ENCODE measurements at regions of chrX and their contacts with region 1.

Region 1: GRCh38 chrX:110412971-110413721 is 54.5 kb downstream of the RTL9 start:
- DNase-seq: peak; percentile 66 to 76
- ATAC-seq: peak; percentile 96 to 97
- H3K4me3 ChIP-seq: no peak overlapping the region
- H3K27ac ChIP-seq: peak overlapping the region; percentile 28 to 69; a peak in 3 of 6 replicates
- H3K4me1 ChIP-seq: peaks cover 22% of the 10 kb centered on the region
- CTCF ChIP-seq: peak; percentile 77
- EP300 ChIP-seq: no peak
- POLR2A ChIP-seq: no peak
- RAD21 ChIP-seq: peak; percentile 77 to 86

Region 2: GRCh38 chrX:110086916-110087484 is 326.1 kb before region 1 on chrX:
- CTCF ChIA-PET with region 1: no interaction called
- POLR2A ChIA-PET with region 1: no interaction called
- DNase-seq: peak; percentile 72 to 94
- ATAC-seq: peak; percentile 84 to 86
- H3K4me3 ChIP-seq: no peak overlapping the region; the same call in 1 of the 3 replicates
- H3K27ac ChIP-seq: peak overlapping the region; percentile 96 to 99
- H3K4me1 ChIP-seq: peaks cover 72% of the 10 kb centered on the region
- CTCF ChIP-seq: no peak
- EP300 ChIP-seq: peak; percentile 59 to 75; a peak in 3 of 5 replicates
- POLR2A ChIP-seq: no peak
- RAD21 ChIP-seq: no peak; a peak in 1 of 5 replicates

Region 3: GRCh38 chrX:110167952-110168451 is 245.1 kb before region 1 on chrX:
- CTCF ChIA-PET with region 1: interaction called, 848 read pairs
- POLR2A ChIA-PET with region 1: no interaction called
- DNase-seq: peak; percentile 25 to 32
- ATAC-seq: peak; percentile 60 to 78; a peak in 4 of 6 replicates
- H3K4me3 ChIP-seq: no peak overlapping the region
- H3K27ac ChIP-seq: peak overlapping the region; percentile 38 to 67; a peak in 5 of 6 replicates
- H3K4me1 ChIP-seq: peaks cover 47% of the 10 kb centered on the region
- CTCF ChIP-seq: peak; percentile 39
- EP300 ChIP-seq: no peak
- POLR2A ChIP-seq: no peak
- RAD21 ChIP-seq: peak; percentile 41 to 42

Region 4: GRCh38 chrX:110402479-110403230 is 10.5 kb before region 1 on chrX:
- CTCF ChIA-PET with region 1: interaction called, 43 read pairs
- POLR2A ChIA-PET with region 1: no interaction called
- DNase-seq: peak; percentile 24 to 66
- ATAC-seq: peak; percentile 93 to 94
- H3K4me3 ChIP-seq: no peak overlapping the region
- H3K27ac ChIP-seq: peak overlapping the region; percentile 71 to 75
- H3K4me1 ChIP-seq: peaks cover 22% of the 10 kb centered on the region
- CTCF ChIP-seq: no peak
- EP300 ChIP-seq: no peak
- POLR2A ChIP-seq: no peak
- RAD21 ChIP-seq: no peak

Region 5: DNA sequence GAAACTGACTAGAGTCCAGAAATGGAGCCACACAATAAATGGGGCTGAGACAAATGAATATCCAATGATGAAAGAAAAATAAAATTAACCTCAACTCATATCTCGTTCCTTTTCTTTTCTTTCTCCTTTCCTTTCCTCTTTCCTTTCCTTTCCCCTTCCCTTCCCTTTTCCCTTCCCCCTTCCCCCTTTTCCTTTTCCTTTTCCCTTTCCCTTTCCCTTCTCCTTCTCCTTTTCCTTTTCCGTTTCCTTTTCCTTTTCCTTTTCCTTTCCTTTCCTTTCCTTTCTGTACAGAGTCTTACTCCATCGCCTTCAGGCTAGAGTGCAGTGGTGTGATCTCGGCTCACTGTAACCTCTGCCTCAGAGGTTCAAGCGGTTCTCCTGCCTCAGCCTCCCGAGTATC is 91.8 kb after region 1 on chrX:
- CTCF ChIA-PET with region 1: no interaction called
- POLR2A ChIA-PET with region 1: no interaction called
- DNase-seq: no peak
- ATAC-seq: no peak
- H3K4me3 ChIP-seq: no peak overlapping the region
- H3K27ac ChIP-seq: no peak overlapping the region
- H3K4me1 ChIP-seq: no peaks in the 10 kb centered on the region
- CTCF ChIP-seq: no peak
- EP300 ChIP-seq: no peak
- POLR2A ChIP-seq: no peak
- RAD21 ChIP-seq: no peak